Caco-2 (cell line): ENCODE measurements at regions of chr12 and their contacts with region 1.

Region 1: DNA sequence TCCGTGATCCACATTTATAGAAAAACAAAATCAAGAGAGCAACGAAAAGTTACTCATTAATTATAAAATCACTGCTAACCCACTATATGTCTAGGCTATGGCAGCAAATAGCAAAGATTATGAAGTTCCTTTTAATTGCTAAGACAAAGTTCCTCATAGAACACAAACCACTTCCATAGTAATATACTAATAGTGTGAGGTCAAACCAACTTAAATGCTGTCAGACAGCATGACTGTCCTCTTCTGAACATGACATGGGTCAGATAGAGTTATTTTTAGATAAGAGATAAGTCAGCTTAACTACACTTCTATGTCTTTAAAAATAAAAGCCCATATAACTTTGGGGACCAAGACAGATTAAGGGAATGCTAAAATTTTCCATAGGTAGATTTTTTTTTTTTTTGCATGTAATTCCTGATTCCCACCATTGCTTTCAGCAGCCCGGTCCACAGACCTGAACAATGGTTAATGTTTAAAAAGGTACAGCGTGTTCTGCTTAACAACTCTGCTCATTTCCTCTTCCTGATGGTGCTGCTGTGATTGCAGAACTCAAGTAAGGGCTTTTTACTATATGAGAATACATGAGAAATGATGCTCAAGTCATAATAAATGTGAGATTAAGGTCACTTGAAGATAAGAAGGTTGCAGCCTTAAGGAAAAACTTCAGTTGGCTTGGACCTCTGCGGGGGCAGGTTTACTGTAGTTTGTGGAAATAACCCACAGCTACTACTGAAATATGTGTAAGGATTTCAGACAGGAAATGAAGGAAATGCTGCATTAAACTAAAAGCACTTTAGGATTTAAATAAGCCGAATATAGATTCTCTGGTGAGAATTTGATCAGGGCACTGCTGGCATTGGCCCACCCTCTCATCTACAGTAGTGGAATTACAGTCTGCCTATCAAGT is 37.7 kb upstream of the DUSP6 start:
- DNase-seq: no peak
- H3K4me3 ChIP-seq: no peak overlapping the region
- H3K4me3 Mint-ChIP-seq: peak overlapping the region; percentile 4
- H3K27ac Mint-ChIP-seq: peak overlapping the region; percentile 34
- H3K4me1 ChIP-seq: peaks cover 60% of the 10 kb centered on the region
- H3K4me1 Mint-ChIP-seq: peaks cover 43% of the 10 kb centered on the region
- H3K27me3 ChIP-seq: no peaks in the 10 kb centered on the region
- H3K27me3 Mint-ChIP-seq: no peaks in the 10 kb centered on the region
- CTCF ChIP-seq: no peak

Region 2: DNA sequence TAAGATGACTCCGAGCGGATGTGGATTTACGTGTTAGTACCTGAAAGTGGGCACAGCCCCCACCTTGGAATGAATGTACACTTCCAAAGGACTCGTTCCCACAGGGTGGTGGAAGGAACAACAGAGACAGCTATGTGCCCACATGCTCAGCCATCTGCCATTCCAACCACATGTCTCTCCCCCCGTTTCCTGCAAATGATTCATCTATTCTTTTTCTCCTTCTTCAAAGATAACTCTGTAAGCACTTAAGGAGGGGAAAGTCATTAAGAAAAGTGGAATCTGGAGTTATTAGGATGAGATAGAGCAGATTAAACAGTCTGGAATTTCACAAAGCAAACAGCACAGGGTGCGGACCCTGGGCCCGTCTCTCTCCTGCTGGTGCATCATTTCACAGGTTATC is 19.2 kb before region 1 on chr12:
- CTCF ChIA-PET with region 1: no interaction called
- POLR2A ChIA-PET with region 1: no interaction called
- intact Hi-C with region 1: loop called (anchors 2 kb)
- DNase-seq: peak; percentile 57 to 85
- H3K4me3 ChIP-seq: no peak overlapping the region
- H3K4me3 Mint-ChIP-seq: peak overlapping the region; percentile 7
- H3K27ac Mint-ChIP-seq: peak overlapping the region; percentile 62
- H3K4me1 ChIP-seq: peaks cover 81% of the 10 kb centered on the region
- H3K4me1 Mint-ChIP-seq: peaks cover 52% of the 10 kb centered on the region
- H3K27me3 ChIP-seq: no peaks in the 10 kb centered on the region
- H3K27me3 Mint-ChIP-seq: no peaks in the 10 kb centered on the region
- CTCF ChIP-seq: no peak

Region 3: DNA sequence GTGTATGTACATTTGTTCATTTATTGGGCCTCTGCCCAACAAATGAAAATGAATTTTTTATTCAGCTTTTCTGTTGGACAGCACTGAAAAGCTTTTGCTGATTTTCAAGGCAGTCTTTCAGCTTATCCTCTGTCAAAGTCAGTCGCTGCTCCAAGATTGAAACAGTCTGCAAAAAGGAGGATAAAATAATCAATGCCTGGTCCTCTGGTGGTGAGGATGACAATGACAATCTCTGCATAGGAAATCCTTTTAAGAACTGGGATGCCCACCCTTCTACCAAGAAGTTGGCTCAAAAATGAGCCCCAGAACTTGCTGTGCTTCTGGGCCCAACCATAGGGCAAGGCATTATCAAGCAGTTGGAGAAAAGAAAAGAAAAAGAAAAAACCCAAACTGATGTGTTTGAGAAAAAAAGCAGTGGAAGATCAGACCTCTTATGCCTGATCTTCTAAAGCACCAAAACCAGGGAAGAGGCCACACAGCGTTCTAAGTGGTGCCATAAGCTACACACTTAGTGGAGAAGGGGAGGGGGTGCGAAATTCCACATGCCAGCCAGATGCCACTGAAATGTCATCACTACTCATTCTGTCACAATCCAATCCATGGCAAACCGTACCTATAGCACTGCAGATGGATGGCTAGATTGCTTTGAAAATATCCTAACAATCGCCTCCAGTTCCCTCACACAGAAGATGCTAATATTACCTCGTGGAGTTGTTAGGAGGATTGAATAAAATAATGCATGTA is 31.3 kb after region 1 on chr12:
- CTCF ChIA-PET with region 1: no interaction called
- POLR2A ChIA-PET with region 1: no interaction called
- intact Hi-C with region 1: no loop called
- DNase-seq: no peak
- H3K4me3 ChIP-seq: no peak overlapping the region
- H3K4me3 Mint-ChIP-seq: no peak overlapping the region
- H3K27ac Mint-ChIP-seq: no peak overlapping the region
- H3K4me1 ChIP-seq: 0 out of 2 replicates have a peak, but pooled peaks cover 2% of the 10 kb centered on the region
- H3K4me1 Mint-ChIP-seq: peaks cover 2% of the 10 kb centered on the region
- H3K27me3 ChIP-seq: no peaks in the 10 kb centered on the region
- H3K27me3 Mint-ChIP-seq: no peaks in the 10 kb centered on the region
- CTCF ChIP-seq: peak; percentile 52 to 56

Region 4: GRCh38 chr12:89542912-89543592 is 153.0 kb after region 1 on chr12:
- CTCF ChIA-PET with region 1: no interaction called
- POLR2A ChIA-PET with region 1: no interaction called
- intact Hi-C with region 1: no loop called
- DNase-seq: peak; percentile 75 to 86
- H3K4me3 ChIP-seq: no peak overlapping the region
- H3K4me3 Mint-ChIP-seq: no peak overlapping the region
- H3K27ac Mint-ChIP-seq: no peak overlapping the region
- H3K4me1 ChIP-seq: peaks cover 29% of the 10 kb centered on the region
- H3K4me1 Mint-ChIP-seq: peaks cover 17% of the 10 kb centered on the region
- H3K27me3 ChIP-seq: no peaks in the 10 kb centered on the region
- H3K27me3 Mint-ChIP-seq: no peaks in the 10 kb centered on the region
- CTCF ChIP-seq: peak; percentile 88 to 89